ENCODE measurements at regions of chr15 and their contacts with region 1.

Region 1: GRCh38 chr15:33700695-33701304 is 267.5 kb upstream of the CHRM5 start:
- DNase-seq: peak; percentile 60 to 65
- H3K4me3 ChIP-seq: no peak overlapping the region
- H3K27ac ChIP-seq: no peak overlapping the region
- H3K4me1 ChIP-seq: no peaks in the 10 kb centered on the region
- H3K27me3 ChIP-seq: no peaks in the 10 kb centered on the region
- CTCF ChIP-seq: peak; percentile 76 to 86 (median 81)
- POLR2A ChIP-seq: no peak

Region 2: DNA sequence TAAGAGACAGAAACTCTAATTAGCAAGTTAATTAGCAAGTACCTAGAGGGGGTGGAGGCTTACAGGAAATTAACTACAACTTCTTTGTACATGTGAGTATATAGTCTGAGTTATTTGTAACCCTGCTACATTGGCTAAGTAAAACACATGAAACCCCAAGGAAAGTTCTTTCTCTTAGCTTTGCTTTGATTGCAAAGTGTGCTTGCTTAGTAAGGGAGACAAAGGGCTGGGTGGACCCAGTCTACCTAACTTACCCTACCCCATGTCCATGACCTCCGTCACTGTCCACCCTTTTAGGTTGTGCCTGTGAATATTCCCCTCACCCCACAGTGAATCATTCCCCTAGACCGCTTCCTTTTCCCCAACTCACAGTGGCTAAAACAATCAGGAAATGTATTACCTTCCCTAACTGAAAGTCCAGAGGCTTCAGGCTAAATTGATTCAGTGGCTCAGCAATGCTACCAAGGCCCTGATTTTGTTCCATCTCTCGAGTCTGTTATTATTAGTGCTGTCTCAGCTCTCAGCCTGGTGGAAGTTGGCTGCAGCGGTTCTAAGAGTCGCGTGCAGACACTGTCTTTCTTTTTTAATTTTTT is 421.1 kb before region 1 on chr15:
- intact Hi-C with region 1: loop called (anchors 10 kb)
- DNase-seq: no peak
- H3K4me3 ChIP-seq: no peak overlapping the region
- H3K27ac ChIP-seq: no peak overlapping the region
- H3K4me1 ChIP-seq: no peaks in the 10 kb centered on the region
- H3K27me3 ChIP-seq: no peaks in the 10 kb centered on the region
- CTCF ChIP-seq: no peak
- POLR2A ChIP-seq: no peak

Region 3: DNA sequence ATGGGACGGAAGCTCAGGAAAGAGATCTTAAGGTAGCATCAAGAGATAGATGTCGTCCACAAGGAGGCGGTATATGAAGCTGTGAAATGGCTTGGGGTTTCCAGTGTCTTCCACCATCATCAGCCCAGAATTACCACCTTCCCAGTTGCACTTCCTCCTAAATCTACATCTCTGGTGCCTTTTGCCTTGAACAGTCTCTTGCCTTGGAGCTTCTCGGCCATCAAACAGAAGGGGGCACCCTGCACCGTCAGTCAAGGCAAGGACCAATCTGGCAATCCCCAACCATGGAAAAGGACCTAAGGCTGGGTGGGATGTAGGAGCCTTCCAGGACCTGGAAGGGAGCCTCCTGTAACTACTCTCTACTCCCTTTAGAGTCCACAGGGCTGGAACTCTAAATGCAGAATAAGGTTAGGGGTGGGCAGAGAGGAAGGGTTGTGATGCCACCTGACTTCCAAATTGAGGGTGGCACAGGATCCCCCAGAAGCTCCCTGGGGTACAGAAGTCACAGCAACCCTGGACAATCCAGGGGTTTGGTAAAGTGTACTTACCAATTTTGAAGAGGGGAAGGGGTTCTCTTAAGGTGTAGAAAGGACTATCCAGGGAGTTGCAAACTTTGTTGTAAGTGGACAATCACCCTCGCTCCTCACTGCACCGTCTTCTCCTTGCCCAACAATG is 391.1 kb before region 1 on chr15:
- intact Hi-C with region 1: loop called (anchors 10 kb)
- DNase-seq: peak; percentile 53 to 59
- H3K4me3 ChIP-seq: peak overlapping the region in 1 of 2 donors; percentile 45
- H3K27ac ChIP-seq: peak overlapping the region in 1 of 2 donors; percentile 85
- H3K4me1 ChIP-seq: no peaks in the 10 kb centered on the region
- H3K27me3 ChIP-seq: no peaks in the 10 kb centered on the region
- CTCF ChIP-seq: peak; percentile 45 to 65 (median 54)
- POLR2A ChIP-seq: no peak

Region 4: DNA sequence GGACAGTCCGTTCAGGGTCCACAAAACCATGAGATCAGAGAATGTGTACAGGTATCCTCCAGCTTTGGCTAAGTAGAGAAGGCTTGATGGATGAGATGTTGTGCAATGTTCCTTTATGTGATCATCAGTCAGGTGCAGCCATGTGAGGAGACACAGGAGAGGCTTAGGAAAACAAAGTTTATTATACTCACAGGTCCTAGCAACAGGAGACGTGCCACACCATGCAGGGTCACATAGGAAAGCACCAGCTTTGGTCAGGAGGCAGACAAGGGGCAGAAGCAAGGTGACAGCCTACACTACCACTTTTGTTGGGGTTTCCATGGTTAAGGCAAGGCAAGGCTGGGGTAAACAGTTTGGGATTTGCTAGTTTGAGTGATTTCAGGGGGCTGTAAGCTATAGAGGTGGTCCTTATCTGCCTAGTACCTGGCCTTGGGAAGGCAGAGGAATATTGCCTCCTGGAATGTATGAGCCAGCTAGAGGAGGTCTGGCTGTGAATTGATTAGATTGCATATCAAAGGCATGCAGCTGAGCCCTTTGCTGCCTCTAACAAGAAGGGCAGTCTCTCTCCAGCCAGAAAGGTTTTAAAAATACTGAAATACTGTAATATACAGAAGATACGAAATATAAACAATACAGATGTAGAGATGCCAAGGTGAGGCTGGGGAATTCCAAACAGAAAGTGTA is 141.5 kb before region 1 on chr15:
- intact Hi-C with region 1: no loop called
- DNase-seq: no peak
- H3K4me3 ChIP-seq: no peak overlapping the region
- H3K27ac ChIP-seq: no peak overlapping the region
- H3K4me1 ChIP-seq: no peaks in the 10 kb centered on the region
- H3K27me3 ChIP-seq: no peaks in the 10 kb centered on the region
- CTCF ChIP-seq: no peak
- POLR2A ChIP-seq: no peak

Region 5: GRCh38 chr15:33874156-33874555 is 173.4 kb after region 1 on chr15:
- intact Hi-C with region 1: no loop called
- DNase-seq: no peak
- H3K4me3 ChIP-seq: no peak overlapping the region
- H3K27ac ChIP-seq: no peak overlapping the region
- H3K4me1 ChIP-seq: no peaks in the 10 kb centered on the region
- H3K27me3 ChIP-seq: no peaks in the 10 kb centered on the region
- CTCF ChIP-seq: no peak
- POLR2A ChIP-seq: no peak